Gastrocnemius medialis (tissue), 4 donors: ENCODE measurements at regions of chr9 and their contacts with region 1.

Region 1: GRCh38 chr9:81535542-81536241 is 153.7 kb downstream of the TLE1 start:
- DNase-seq: no peak
- ATAC-seq: no peak
- H3K4me3 ChIP-seq: no peak overlapping the region
- H3K27ac ChIP-seq: peak overlapping the region in 1 of 4 donors; percentile 86
- H3K4me1 ChIP-seq: peaks cover 13 to 23% of the 10 kb centered on the region in 2 donors
- H3K27me3 ChIP-seq: no peaks in the 10 kb centered on the region
- CTCF ChIP-seq: no peak
- POLR2A ChIP-seq: no peak

Region 2: GRCh38 chr9:81465468-81466011 is 70.2 kb before region 1 on chr9:
- in situ Hi-C with region 1: no loop called
- intact Hi-C with region 1: loop called (anchors 2 kb)
- DNase-seq: peak; percentile 40 to 45
- ATAC-seq: peak; percentile 92 to 97
- H3K4me3 ChIP-seq: peak overlapping the region; percentile 24 to 37 (median 35)
- H3K27ac ChIP-seq: peak overlapping the region; percentile 74 to 91 (median 86)
- H3K4me1 ChIP-seq: peaks cover 16 to 26% of the 10 kb centered on the region in 2 donors
- H3K27me3 ChIP-seq: no peaks in the 10 kb centered on the region
- CTCF ChIP-seq: peak; percentile 16 to 52 (median 46)
- POLR2A ChIP-seq: peak; percentile 33 to 77

Region 3: GRCh38 chr9:81558091-81558830 is 22.6 kb after region 1 on chr9:
- in situ Hi-C with region 1: no loop called
- intact Hi-C with region 1: loop called (anchors 1 kb)
- DNase-seq: no peak
- ATAC-seq: peak in 1 of 2 donors; percentile 11
- H3K4me3 ChIP-seq: no peak overlapping the region
- H3K27ac ChIP-seq: peak overlapping the region; percentile 34 to 53 (median 44)
- H3K4me1 ChIP-seq: peaks cover 8 to 27% of the 10 kb centered on the region in 2 donors
- H3K27me3 ChIP-seq: no peaks in the 10 kb centered on the region
- CTCF ChIP-seq: no peak
- POLR2A ChIP-seq: no peak

Region 4: DNA sequence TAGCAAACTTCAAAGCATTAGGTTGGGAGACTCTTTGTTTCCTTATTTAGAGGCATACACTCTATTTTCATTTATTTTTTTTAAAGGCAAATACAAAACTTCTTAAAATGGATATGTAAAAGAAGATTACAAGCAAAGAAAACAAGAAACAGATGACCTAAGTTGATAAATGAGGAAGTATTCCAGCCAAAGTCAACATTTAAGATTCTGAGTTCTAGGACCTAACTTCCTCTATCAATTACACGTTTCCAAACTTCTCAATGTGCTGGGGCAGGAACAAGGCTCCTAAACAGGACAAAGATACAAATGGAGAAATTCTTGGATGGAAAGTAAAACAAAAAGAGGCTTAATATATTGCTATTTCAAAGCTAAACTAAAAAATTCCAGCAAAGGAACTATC is 64.1 kb after region 1 on chr9:
- in situ Hi-C with region 1: no loop called
- intact Hi-C with region 1: loop called (anchors 2 kb)
- DNase-seq: no peak
- ATAC-seq: no peak
- H3K4me3 ChIP-seq: no peak overlapping the region
- H3K27ac ChIP-seq: peak overlapping the region; percentile 81 to 93 (median 90)
- H3K4me1 ChIP-seq: peaks cover 62 to 63% of the 10 kb centered on the region in 2 donors
- H3K27me3 ChIP-seq: no peaks in the 10 kb centered on the region
- CTCF ChIP-seq: no peak
- POLR2A ChIP-seq: no peak

Region 5: DNA sequence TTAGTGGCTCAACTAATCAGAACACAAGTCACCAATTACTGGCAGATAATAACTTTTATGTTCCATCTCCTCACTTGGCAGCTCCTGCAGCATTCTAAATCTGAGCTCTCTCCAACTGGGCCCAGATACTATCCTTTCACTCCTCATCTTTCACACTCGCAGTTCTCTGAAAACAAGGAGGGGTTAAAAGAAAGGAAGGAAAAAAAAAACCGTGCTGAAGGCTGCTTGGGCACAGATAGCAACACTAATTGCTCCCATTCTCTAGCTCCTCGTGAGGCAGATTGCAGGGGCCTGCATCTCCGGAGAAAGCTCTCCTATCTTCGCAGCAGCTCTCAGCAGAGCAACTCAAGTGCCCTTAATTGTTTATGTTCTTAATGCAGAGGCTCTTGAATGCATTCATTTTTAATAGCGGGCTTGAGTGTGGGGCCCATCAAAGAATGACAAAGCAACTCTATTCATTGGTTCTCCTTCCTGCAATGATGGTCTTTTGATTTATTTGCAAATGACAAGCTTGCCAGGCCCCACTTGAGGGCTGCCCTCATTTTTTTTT is 129.7 kb after region 1 on chr9:
- in situ Hi-C with region 1: no loop called
- intact Hi-C with region 1: no loop called
- DNase-seq: no peak
- ATAC-seq: peak in 1 of 2 donors; percentile 19
- H3K4me3 ChIP-seq: peak overlapping the region in 1 of 4 donors; percentile 8
- H3K27ac ChIP-seq: peak overlapping the region; percentile 58 to 67 (median 62)
- H3K4me1 ChIP-seq: peaks cover 61 to 80% of the 10 kb centered on the region in 2 donors
- H3K27me3 ChIP-seq: no peaks in the 10 kb centered on the region
- CTCF ChIP-seq: no peak
- POLR2A ChIP-seq: no peak